B cell (primary cell): ENCODE measurements at regions of chr4 and their contacts with region 1.

Region 1: DNA sequence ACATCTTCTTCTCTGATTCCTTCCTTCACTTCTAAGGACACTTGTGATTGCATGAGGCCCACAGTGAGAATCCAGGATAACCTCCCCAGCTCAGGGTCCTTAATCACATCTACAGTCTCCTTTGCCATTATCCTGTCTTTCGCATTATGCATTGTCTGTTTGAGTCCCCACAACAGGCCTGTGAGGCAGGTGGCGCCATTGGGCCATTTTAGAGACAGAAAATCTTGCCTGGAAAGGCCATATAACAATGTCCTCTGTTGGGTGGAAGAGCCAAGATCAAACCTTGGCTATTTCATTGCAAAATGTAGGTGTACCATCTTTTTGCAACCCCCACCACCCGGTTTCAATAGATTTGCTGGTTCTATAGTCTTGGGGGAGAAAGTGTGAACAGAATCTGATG is 11.8 kb upstream of the DCUN1D4 start:
- DNase-seq: peak; percentile 61
- ATAC-seq: peak; percentile 49
- H3K4me3 ChIP-seq: no peak overlapping the region
- H3K4me3 Mint-ChIP-seq: no peak overlapping the region
- H3K27ac ChIP-seq: no peak overlapping the region
- H3K27ac Mint-ChIP-seq: no peak overlapping the region
- H3K4me1 ChIP-seq: no peaks in the 10 kb centered on the region
- H3K4me1 Mint-ChIP-seq: no peaks in the 10 kb centered on the region
- H3K27me3 ChIP-seq: peaks cover 0 to 7% (median 0%) of the 10 kb centered on the region in 4 experiments
- H3K27me3 Mint-ChIP-seq: peaks cover 48% of the 10 kb centered on the region
- CTCF ChIP-seq: peak; percentile 69

Region 2: DNA sequence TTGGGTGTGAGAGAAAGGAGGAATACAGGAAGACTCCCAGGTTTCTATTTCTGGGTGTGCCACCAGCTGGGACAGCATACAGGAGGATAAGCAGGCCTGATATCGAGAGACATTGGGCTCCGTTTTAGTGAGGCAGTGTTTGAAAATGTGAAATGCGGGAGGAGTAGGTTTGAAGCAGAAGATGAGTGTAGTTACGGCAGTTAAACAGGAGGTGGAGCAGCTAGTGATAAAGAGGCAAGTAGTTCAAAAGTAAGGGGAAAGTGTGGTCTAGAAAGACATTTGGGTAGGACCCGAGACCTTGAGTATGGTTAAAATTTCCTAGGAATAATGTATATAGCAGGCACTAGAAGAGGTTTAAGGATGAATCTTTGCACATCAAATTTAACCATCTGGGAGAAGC is 54.2 kb after region 1 on chr4:
- CTCF ChIA-PET with region 1: no interaction called
- POLR2A ChIA-PET with region 1: no interaction called
- intact Hi-C with region 1: no loop called
- DNase-seq: peak; percentile 13
- ATAC-seq: no peak
- H3K4me3 ChIP-seq: no peak overlapping the region
- H3K4me3 Mint-ChIP-seq: no peak overlapping the region
- H3K27ac ChIP-seq: no peak overlapping the region
- H3K27ac Mint-ChIP-seq: no peak overlapping the region
- H3K4me1 ChIP-seq: no peaks in the 10 kb centered on the region
- H3K4me1 Mint-ChIP-seq: no peaks in the 10 kb centered on the region
- H3K27me3 ChIP-seq: no peaks in the 10 kb centered on the region
- H3K27me3 Mint-ChIP-seq: no peaks in the 10 kb centered on the region
- CTCF ChIP-seq: peak; percentile 45

Region 3: DNA sequence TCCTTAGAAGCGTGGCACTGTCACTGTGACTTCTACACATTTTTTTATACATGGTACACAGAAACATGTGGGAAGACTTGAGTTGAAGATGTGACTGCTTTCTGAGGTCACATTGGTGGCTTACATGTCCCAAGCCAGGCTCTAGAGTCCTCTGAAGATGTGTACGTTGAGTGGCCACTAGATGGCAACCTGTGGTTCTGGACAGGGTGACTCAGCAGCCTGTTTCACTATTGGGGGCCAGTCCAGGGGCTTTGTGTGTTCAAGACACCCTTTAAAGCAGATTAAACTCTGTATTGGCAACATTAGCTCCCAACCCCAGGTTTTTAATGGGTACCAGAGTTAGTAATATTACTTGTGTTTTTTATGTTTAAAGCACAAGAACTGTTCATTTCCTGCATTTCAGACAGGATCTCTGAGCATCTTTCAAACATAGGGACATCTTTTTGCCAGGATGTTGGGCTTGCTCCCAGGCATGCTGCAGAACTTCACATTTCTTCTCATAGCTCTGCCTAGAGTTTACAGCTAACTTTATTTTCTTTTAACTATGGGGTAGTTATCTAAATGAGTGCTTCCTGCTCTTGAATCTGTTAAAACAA is 64.8 kb after region 1 on chr4:
- CTCF ChIA-PET with region 1: interaction called, 8 read pairs
- POLR2A ChIA-PET with region 1: no interaction called
- intact Hi-C with region 1: loop called (anchors 2 kb)
- DNase-seq: peak; percentile 61
- ATAC-seq: peak; percentile 89
- H3K4me3 ChIP-seq: no peak overlapping the region
- H3K4me3 Mint-ChIP-seq: no peak overlapping the region
- H3K27ac ChIP-seq: no peak overlapping the region
- H3K27ac Mint-ChIP-seq: no peak overlapping the region
- H3K4me1 ChIP-seq: no peaks in the 10 kb centered on the region
- H3K4me1 Mint-ChIP-seq: peaks cover 3% of the 10 kb centered on the region
- H3K27me3 ChIP-seq: no peaks in the 10 kb centered on the region
- H3K27me3 Mint-ChIP-seq: no peaks in the 10 kb centered on the region
- CTCF ChIP-seq: peak; percentile 83

Region 4: GRCh38 chr4:52028969-52029368 is 197.8 kb after region 1 on chr4:
- CTCF ChIA-PET with region 1: interaction called, 22 read pairs
- POLR2A ChIA-PET with region 1: no interaction called
- intact Hi-C with region 1: no loop called
- DNase-seq: no peak
- ATAC-seq: no peak
- H3K4me3 ChIP-seq: no peak overlapping the region
- H3K4me3 Mint-ChIP-seq: no peak overlapping the region
- H3K27ac ChIP-seq: no peak overlapping the region
- H3K27ac Mint-ChIP-seq: no peak overlapping the region
- H3K4me1 ChIP-seq: no peaks in the 10 kb centered on the region
- H3K4me1 Mint-ChIP-seq: no peaks in the 10 kb centered on the region
- H3K27me3 ChIP-seq: no peaks in the 10 kb centered on the region
- H3K27me3 Mint-ChIP-seq: no peaks in the 10 kb centered on the region
- CTCF ChIP-seq: no peak

Region 5: GRCh38 chr4:52343595-52343994 is 512.5 kb after region 1 on chr4:
- CTCF ChIA-PET with region 1: no interaction called
- POLR2A ChIA-PET with region 1: no interaction called
- intact Hi-C with region 1: no loop called
- DNase-seq: no peak
- ATAC-seq: no peak
- H3K4me3 ChIP-seq: no peak overlapping the region
- H3K4me3 Mint-ChIP-seq: no peak overlapping the region
- H3K27ac ChIP-seq: no peak overlapping the region
- H3K27ac Mint-ChIP-seq: no peak overlapping the region
- H3K4me1 ChIP-seq: no peaks in the 10 kb centered on the region
- H3K4me1 Mint-ChIP-seq: no peaks in the 10 kb centered on the region
- H3K27me3 ChIP-seq: no peaks in the 10 kb centered on the region
- H3K27me3 Mint-ChIP-seq: peaks cover 3% of the 10 kb centered on the region
- CTCF ChIP-seq: no peak